Posterior cingulate gyrus (tissue), 11 donors: ENCODE measurements at regions of chr4 and their contacts with region 1.

Region 1: GRCh38 chr4:88706574-88706973 is 8.9 kb upstream of the NAP1L5 start:
- DNase-seq: peak in 4 of 10 donors; percentile 38 to 87 (median 74)

Region 2: GRCh38 chr4:88791274-88791673 is 84.7 kb after region 1 on chr4:
- intact Hi-C with region 1: loop called (anchors 1 kb)
- DNase-seq: no peak

Region 3: GRCh38 chr4:89024051-89024675 is 317.6 kb after region 1 on chr4:
- intact Hi-C with region 1: loop called (anchors 5 kb)
- DNase-seq: peak in 2 of 10 donors; percentile 9 to 46

Region 4: GRCh38 chr4:89110986-89111832 is 404.6 kb after region 1 on chr4 and contains the start of gene TIGD2:
- intact Hi-C with region 1: loop called (anchors 10 kb)
- DNase-seq: peak; percentile 70 to 97 (median 80)